Activated CD8-positive, alpha-beta T cell treated with anti-CD3 and anti-CD28 coated beads for 36 hours (primary cell): ENCODE measurements at regions of chr5 and their contacts with region 1.

Region 1: DNA sequence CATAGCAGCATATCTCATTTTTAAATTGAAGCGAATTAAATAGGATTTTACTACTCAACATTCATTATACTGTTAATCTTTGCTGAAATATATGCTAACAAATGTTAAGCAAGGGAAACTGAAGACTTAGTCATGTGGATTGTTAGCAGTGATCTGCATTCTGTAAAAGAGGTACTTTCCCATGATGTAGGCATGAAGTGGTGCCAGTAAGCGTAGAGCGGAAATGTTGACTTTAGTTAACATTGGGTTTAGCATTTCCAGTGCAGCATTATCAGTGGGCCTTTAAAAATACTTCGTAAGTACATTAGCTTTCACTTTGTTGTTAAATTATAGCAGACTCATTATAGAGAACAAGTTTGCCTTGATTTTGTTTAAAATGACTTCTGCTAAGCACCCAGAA is 130.3 kb downstream of the CDC42SE2 start:
- DNase-seq: peak; percentile 69
- ATAC-seq: peak; percentile 76
- H3K4me3 Mint-ChIP-seq: peak overlapping the region; percentile 66
- H3K27ac Mint-ChIP-seq: peak overlapping the region; percentile 88
- H3K4me1 Mint-ChIP-seq: peaks cover 83% of the 10 kb centered on the region
- H3K27me3 Mint-ChIP-seq: no peaks in the 10 kb centered on the region
- CTCF ChIP-seq: no peak

Region 2: GRCh38 chr5:131413605-131414559 is 19.8 kb after region 1 on chr5:
- CTCF ChIA-PET with region 1: interaction called, 9 read pairs
- POLR2A ChIA-PET with region 1: interaction called, 11 read pairs
- intact Hi-C with region 1: loop called (anchors 2 kb)
- DNase-seq: peak; percentile 56
- ATAC-seq: peak; percentile 85
- H3K4me3 Mint-ChIP-seq: peak overlapping the region; percentile 48
- H3K27ac Mint-ChIP-seq: peak overlapping the region; percentile 94
- H3K4me1 Mint-ChIP-seq: peaks cover 40% of the 10 kb centered on the region
- H3K27me3 Mint-ChIP-seq: no peaks in the 10 kb centered on the region
- CTCF ChIP-seq: no peak